H1 (cell line): ENCODE measurements at regions of chr17 and their contacts with region 1.

Region 1: GRCh38 chr17:74237321-74237720 is 23.9 kb downstream of the TTYH2 start:
- DNase-seq: no peak
- H3K4me3 ChIP-seq: no peak overlapping the region
- H3K27ac ChIP-seq: no peak overlapping the region
- H3K4me1 ChIP-seq: peaks cover 3 to 13% (median 9%) of the 10 kb centered on the region in 4 experiments; a peak in 6 of 7 replicates
- H3K27me3 ChIP-seq: no peaks in the 10 kb centered on the region
- CTCF ChIP-seq: no peak
- EP300 ChIP-seq: no peak
- POLR2A ChIP-seq: no peak
- RAD21 ChIP-seq: no peak

Region 2: DNA sequence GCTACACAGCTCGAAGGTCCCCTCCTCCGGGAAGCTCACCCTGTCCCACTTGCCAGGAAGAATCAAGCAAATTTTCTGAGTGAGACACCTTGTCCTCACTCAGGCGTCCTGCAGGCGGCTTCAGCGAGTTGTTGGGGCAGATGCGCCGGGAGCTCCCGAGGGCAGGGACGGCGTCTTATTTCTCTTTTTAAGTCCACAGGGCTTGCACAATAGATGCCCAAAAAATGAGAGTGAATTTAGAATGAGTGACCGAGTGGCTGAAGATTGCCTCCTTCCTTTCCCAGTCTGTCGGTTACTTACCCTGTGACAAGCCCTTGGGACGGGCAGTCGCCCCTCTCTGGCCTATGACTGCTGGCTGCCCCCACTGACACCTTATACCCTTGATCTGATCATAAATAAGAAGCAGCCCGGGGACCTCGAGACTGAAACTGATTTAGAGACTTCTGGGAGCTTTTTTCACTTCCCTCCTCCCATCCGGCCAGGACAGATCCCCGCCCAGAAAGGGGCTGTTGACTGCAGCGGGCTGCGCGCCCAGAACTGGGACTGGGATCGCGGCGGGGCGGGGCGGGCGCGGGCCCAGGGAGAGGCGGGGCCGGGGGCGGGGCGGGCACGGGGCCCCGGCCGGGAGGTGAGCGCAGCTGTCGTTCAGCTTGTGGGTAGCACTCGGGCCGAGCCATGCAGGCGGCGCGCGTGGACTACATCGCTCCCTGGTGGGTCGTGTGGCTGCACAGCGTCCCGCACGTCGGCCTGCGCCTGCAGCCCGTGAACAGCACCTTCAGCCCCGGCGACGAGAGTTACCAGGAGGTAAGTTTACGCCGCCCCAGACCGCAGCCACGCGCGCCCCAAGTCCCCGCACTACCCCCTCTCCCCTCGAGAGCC is 24.2 kb before region 1 on chr17 and contains the start of gene TTYH2:
- CTCF ChIA-PET with region 1: interaction called, 6 read pairs
- POLR2A ChIA-PET with region 1: interaction called, 61 read pairs
- DNase-seq: peak in 1 of 2 experiments; percentile 81
- H3K4me3 ChIP-seq: peak within 1 kb of the TSS; percentile 56 to 64 (median 62)
- H3K27ac ChIP-seq: no peak within 1 kb of the TSS
- H3K4me1 ChIP-seq: peaks cover 8 to 21% (median 20%) of the 10 kb centered on the region in 4 experiments
- H3K27me3 ChIP-seq: peaks cover 2 to 20% (median 11%) of the 10 kb centered on the region in 4 experiments; a peak in 6 of 7 replicates
- CTCF ChIP-seq: peak; percentile 28 to 39 (median 38); a peak in 3 of 4 replicates
- EP300 ChIP-seq: 0 out of 3 replicates have a peak, but pooled peaks of 1 of the 2 experiments have one; percentile 35
- POLR2A ChIP-seq: no peak
- RAD21 ChIP-seq: peak in 1 of 2 experiments; percentile 15; a peak in 1 of 4 replicates
- total RNA-seq, gene TTYH2: 3.2 and 3.7 TPM in 2 replicates

Region 3: DNA sequence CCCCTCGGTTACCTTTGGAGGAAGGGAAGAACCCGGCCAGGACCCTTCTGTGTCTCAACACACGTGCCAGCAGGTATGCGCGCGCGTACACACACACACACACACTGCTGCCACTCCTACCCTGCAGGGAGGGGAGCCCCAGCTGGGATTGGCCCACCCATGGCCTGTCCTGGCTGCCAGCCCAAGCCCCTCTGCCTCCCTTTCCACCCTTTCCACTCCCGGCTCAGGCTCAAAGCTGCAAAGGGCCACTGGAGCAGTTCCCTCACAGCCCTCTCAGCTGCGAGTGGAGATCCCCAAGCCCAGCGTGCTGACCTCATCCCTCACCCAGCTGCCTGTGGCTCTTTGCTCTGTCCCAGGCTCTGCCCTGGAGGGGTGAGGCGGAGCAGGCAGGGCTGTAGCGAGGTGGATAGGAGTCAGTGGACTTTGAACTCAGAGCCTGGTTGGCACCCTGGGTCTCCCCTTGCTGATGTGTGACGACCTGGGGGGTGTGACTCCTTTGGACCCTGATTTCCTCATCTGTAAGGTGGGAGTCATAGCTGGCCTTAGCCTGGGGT is 103.2 kb after region 1 on chr17:
- CTCF ChIA-PET with region 1: no interaction called
- POLR2A ChIA-PET with region 1: no interaction called
- DNase-seq: no peak
- H3K4me3 ChIP-seq: no peak overlapping the region
- H3K27ac ChIP-seq: no peak overlapping the region
- H3K4me1 ChIP-seq: peaks cover 0 to 16% (median 9%) of the 10 kb centered on the region in 4 experiments; a peak in 5 of 7 replicates
- H3K27me3 ChIP-seq: no peaks in the 10 kb centered on the region; a peak in 1 of 7 replicates
- CTCF ChIP-seq: no peak
- EP300 ChIP-seq: no peak
- POLR2A ChIP-seq: no peak
- RAD21 ChIP-seq: no peak